Mammary epithelial cell (primary cell): ENCODE measurements at regions of chr22 and their contacts with region 1.

Region 1: DNA sequence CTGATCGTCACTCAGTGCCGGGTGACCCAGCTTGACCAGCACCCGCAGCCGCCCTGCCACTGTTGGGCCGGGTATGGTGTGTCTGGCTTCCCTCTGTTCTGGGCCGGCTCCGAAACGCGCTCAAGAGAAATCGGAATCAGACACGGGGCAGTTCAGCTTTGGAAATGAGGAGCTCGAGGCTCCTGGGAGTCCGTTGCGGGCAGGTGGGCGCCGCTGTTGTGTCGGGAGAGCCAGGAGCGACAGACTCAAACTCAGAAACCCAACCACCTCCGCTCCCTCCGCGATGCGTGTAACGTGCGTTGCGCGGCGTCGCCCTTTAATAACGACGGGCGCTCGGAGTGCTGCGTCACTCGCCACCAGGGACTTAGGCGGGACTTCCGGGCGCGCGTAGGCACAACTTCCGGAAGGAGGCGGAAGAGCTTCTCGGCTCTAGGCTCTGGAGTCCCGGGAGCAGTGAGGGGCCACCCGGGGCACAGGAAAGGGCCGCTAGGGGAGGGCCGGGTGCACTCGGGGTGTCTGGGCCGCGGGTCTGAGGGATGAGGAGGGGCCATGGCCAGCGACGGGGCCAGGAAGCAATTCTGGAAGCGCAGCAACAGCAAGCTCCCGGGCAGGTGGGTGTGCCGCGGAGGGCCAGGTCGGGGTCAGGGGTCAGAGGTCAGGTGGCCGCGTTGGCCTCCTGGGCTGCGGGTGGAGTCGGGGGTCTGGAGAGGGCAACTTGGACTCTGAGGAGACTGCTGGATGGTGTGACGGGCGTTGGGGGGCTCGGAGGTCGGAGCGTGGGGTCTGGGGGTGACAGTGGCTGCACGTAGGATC is at the start of gene TBC1D22A:
- DNase-seq: peak; percentile 88
- H3K4me3 ChIP-seq: peak within 1 kb of the TSS; percentile 87 to 100 (median 98)
- H3K27ac ChIP-seq: peak within 1 kb of the TSS; percentile 84
- H3K4me1 ChIP-seq: peaks cover 11% of the 10 kb centered on the region
- H3K27me3 ChIP-seq: no peaks in the 10 kb centered on the region
- CTCF ChIP-seq: peak in 1 of 2 donors; percentile 3
- total RNA-seq, gene TBC1D22A: 19.3 to 27.0 TPM

Region 2: GRCh38 chr22:46563381-46564083 is 198.9 kb before region 1 on chr22:
- CTCF ChIA-PET with region 1: interaction called, 9 read pairs
- dilution Hi-C with region 1: no loop called
- in situ Hi-C with region 1: no loop called
- intact Hi-C with region 1: loop called (anchors 1 kb)
- DNase-seq: peak; percentile 42
- H3K4me3 ChIP-seq: peak overlapping the region in 1 of 3 experiments; percentile 12
- H3K27ac ChIP-seq: no peak overlapping the region
- H3K4me1 ChIP-seq: peaks cover 14% of the 10 kb centered on the region
- H3K27me3 ChIP-seq: no peaks in the 10 kb centered on the region
- CTCF ChIP-seq: peak; percentile 90

Region 3: DNA sequence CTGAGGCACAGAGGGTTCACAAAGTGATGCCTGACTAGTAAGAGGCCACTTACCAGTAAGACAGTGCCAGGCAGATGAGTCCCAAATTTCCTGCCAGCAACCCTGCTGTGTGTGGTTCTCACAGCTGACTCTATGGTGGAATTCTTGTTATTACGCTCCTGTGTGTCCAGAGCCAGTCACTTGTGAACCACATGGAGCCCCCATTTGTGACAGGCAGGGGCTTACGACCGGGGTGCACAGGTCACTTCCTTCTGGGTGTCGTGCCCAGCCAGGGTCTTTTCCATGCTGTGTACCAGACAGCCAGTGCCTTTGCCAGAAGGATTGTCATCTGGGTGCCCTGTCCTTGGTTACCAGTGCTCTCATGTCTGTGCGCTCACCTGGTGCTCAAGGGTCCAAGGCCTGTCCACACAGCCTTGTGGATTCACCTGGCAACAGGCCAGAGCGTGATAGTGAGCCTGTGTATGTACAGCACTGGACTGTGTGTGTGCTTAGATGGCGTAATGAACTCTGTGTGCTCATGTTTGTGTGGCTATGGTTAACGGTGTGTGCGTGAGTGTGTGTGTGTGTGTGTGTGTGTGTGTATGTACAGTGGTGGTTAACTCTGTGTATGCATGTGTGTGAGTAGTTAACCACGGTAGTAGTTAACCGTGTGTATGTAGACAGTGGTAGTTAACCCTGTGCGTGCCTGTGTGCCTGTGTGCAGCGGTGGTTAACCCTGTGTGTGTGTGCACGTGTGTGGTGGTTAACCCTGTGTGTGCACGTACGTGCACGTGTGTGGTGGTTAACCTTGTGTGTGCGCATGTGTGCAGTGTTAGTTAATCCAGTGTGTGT is 123.6 kb before region 1 on chr22:
- CTCF ChIA-PET with region 1: no interaction called
- dilution Hi-C with region 1: no loop called
- in situ Hi-C with region 1: no loop called
- intact Hi-C with region 1: no loop called
- DNase-seq: no peak
- H3K4me3 ChIP-seq: no peak overlapping the region
- H3K27ac ChIP-seq: no peak overlapping the region
- H3K4me1 ChIP-seq: peaks cover 7% of the 10 kb centered on the region
- H3K27me3 ChIP-seq: no peaks in the 10 kb centered on the region
- CTCF ChIP-seq: no peak

Region 4: DNA sequence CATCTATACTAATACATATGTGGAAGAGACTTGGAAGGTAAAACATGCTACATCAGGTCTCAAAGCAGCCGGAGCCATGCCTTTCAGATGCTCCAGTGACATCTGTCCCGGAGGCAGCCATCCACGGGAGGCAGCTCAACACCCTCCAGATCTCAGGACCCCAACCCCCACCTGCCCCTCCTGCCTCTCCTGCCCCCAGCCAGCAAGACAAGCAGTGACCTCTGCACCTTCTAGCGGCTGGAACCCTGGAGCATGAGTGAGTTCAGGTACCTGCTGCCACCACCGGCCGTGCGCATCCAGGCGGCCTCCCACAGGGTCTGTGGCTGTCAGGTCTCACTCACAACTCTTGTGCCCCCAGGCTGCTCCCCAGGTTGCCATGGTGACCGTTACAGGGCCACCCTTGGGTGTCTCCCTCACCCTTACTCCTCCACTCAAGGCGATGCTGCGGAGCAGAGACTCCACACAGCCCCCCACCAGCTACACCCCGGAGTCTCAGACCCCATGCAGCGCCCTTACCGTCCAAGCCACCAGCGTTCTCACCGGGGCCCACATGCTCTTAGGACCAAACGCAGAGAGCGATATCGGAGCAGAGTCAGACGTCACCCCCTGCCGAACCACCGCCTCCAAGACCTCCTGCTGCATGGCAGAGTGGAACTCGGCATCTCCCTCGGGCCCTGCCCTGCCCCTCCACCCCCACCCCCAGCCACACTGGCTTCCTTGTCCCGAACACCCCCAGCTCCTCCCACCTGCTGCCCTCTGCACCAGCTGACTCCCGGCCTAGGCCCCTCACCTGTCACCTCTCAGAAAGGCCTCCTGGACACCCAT is 59.1 kb before region 1 on chr22:
- CTCF ChIA-PET with region 1: no interaction called
- dilution Hi-C with region 1: no loop called
- in situ Hi-C with region 1: no loop called
- intact Hi-C with region 1: no loop called
- DNase-seq: no peak
- H3K4me3 ChIP-seq: no peak overlapping the region
- H3K27ac ChIP-seq: no peak overlapping the region
- H3K4me1 ChIP-seq: no peaks in the 10 kb centered on the region
- H3K27me3 ChIP-seq: no peaks in the 10 kb centered on the region
- CTCF ChIP-seq: no peak

Region 5: DNA sequence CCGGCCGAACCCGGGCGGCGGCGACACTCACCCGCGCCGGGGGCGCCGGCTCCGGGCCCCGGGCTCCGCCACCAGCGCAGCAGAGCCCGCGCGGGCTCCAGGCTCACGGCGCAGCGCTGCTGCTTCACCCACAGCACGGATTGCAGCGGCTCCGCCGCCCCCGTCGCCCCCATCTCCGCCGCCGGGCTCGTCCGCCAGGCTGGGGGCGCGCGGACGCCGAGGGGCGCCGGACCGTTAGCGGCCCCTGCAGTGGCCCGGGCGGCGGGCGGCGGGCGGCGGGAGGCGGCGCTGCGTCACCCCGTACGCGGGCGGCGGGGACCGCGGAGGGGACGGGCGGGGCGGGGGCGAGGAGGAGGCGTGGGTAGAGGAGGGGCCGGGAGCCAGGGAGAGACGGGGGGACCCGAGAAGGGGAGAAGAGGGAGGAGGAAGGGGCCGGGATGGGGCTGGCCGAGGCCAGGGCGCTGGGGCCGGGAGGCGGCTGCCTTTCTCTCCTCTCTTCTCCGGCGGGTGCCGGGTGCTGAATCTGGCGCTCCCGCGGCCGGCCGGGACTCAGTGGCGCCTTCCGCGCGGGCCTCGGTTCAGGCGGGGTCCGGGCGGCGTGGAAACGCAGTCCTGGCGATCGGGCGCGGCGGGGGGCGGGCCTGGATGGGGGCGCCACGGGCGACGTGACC is 24.3 kb before region 1 on chr22 and contains the start of gene CERK:
- CTCF ChIA-PET with region 1: no interaction called
- dilution Hi-C with region 1: no loop called
- in situ Hi-C with region 1: no loop called
- intact Hi-C with region 1: loop called (anchors 2 kb)
- DNase-seq: no peak
- H3K4me3 ChIP-seq: peak within 1 kb of the TSS; percentile 49 to 66 (median 65)
- H3K27ac ChIP-seq: no peak within 1 kb of the TSS
- H3K4me1 ChIP-seq: peaks cover 19% of the 10 kb centered on the region
- H3K27me3 ChIP-seq: no peaks in the 10 kb centered on the region
- CTCF ChIP-seq: no peak
- total RNA-seq, gene CERK: 16.3 to 17.5 TPM

Region 6: DNA sequence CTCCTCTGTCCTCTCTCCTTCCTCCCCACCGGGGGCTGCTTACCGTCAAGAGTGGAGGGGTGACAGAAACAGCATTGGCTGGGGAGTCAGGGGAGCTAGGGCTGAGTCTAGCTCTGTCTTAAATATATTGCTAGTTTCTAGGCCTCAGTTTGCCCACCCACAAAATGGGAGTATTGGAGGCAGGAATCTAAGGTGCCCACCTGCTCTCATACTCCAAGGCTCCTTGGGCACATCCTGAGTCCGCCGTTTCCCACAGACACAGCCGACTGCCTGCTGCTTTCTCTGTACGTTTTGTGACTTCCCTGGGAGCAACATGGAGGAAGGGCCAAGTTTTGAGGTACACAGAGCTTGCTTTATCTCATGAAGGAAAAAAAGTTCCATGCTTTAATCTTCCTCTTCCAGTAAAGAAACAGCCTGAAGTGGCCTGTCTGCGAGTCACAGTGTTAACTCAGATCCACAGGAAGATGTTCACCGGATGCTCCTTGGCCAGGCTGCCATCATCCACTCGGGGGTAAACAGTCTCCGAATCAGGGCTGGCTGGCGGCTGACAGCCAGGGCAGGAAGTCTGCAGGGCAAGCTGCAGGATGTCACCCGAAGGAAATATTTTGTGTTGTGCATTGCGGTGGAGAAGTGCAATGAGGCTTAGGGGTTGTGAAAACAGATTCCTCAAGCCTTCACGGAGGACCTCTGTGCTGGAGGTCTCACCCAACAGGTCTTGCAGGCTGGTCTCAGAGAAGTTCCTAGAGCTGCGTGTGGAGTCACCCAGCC is 13.4 kb before region 1 on chr22:
- CTCF ChIA-PET with region 1: no interaction called
- dilution Hi-C with region 1: no loop called
- in situ Hi-C with region 1: no loop called
- intact Hi-C with region 1: no loop called
- DNase-seq: no peak
- H3K4me3 ChIP-seq: no peak overlapping the region
- H3K27ac ChIP-seq: no peak overlapping the region
- H3K4me1 ChIP-seq: peaks cover 7% of the 10 kb centered on the region
- H3K27me3 ChIP-seq: no peaks in the 10 kb centered on the region
- CTCF ChIP-seq: no peak

Region 7: GRCh38 chr22:46798366-46799350 is 36.2 kb after region 1 on chr22:
- CTCF ChIA-PET with region 1: interaction called, 6 read pairs
- dilution Hi-C with region 1: no loop called
- in situ Hi-C with region 1: loop called in 1 of 2 experiments (anchors 5 kb)
- intact Hi-C with region 1: loop called (anchors 1 kb)
- DNase-seq: peak; percentile 34
- H3K4me3 ChIP-seq: no peak overlapping the region
- H3K27ac ChIP-seq: no peak overlapping the region
- H3K4me1 ChIP-seq: peaks cover 6% of the 10 kb centered on the region
- H3K27me3 ChIP-seq: no peaks in the 10 kb centered on the region
- CTCF ChIP-seq: peak; percentile 90 to 94